A549 (cell line): ENCODE measurements at regions of chr6 and their contacts with region 1.

Region 1: GRCh38 chr6:34757687-34758274 is 476 bp downstream of the SNRPC start:
- DNase-seq: no peak
- ATAC-seq: no peak; a peak in 1 of 6 replicates
- H3K4me3 ChIP-seq: peak overlapping the region; percentile 69
- H3K27ac ChIP-seq: peak overlapping the region; percentile 95 to 98
- H3K4me1 ChIP-seq: 0 out of 3 replicates have a peak, but pooled peaks cover 3% of the 10 kb centered on the region
- CTCF ChIP-seq: no peak
- EP300 ChIP-seq: no peak
- POLR2A ChIP-seq: no peak
- RAD21 ChIP-seq: no peak

Region 2: DNA sequence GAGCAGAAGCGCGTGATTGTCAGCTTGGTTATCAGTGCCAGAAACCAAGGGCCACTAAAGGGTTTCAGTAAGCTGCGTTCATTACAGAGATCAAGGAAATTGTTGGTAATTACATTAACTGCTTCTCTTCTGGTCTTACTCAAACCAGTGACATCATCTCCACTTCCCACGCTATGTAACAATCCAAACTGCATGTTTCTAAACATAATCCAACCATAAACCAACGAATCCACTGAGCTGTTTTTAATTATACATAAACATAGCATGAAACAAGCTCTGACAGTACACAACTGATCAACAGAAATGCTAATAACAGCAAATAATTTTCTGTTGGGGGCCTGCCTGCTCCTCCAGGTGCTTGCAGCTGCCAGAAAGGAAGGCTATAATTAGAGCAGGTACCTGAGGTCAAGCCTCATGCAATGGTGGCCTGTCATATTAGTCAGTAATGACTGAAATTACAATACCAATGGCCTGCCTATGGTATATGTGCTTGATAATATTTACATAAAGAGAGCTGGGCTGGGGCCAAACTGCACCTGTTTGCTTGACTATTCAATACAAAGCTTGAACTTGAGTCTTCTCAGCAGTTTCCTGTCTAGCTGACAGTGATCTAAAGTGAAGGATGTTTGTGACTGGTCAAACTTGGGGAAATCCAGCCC is 101.3 kb before region 1 on chr6:
- CTCF ChIA-PET with region 1: interaction called, 5 read pairs
- POLR2A ChIA-PET with region 1: interaction called, 13 read pairs
- DNase-seq: no peak
- ATAC-seq: peak; percentile 28 to 41; a peak in 3 of 6 replicates
- H3K4me3 ChIP-seq: peak overlapping the region; percentile 28; the same call in 1 of the 3 replicates
- H3K27ac ChIP-seq: peak overlapping the region; percentile 79 to 95
- H3K4me1 ChIP-seq: peaks cover 51% of the 10 kb centered on the region
- CTCF ChIP-seq: no peak
- EP300 ChIP-seq: no peak
- POLR2A ChIP-seq: no peak
- RAD21 ChIP-seq: no peak

Region 3: DNA sequence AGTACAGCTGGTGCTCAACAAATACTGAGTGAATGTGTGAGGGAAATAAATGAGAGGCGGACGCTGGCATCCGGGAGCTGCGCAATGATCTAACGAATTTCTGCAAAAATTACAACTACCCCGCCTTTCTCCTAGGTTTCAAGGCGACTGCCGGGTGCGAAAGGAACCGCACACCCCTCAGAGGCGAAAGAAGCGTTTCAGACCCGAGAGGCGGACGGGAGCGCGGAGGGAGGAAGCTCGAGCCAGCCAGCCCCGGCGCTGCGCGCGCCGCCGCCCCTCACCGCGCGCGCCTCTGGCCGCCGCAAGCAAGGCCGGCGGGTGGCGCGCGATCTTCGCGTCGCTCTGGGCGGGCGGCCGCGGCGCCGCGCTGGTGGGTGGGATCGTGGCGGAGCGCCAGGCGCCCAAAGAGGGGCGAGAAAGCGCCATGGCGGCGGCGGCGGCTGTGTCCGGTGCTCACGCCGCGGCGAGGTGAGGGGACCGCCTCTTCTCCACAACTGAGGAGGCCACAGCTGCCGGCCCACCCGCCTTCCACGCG is 34.0 kb after region 1 on chr6 and contains the start of gene BLTP3A:
- CTCF ChIA-PET with region 1: interaction called, 6 read pairs
- POLR2A ChIA-PET with region 1: interaction called, 10 read pairs
- DNase-seq: peak; percentile 61 to 69
- ATAC-seq: peak; percentile 88 to 89
- H3K4me3 ChIP-seq: peak within 1 kb of the TSS; percentile 96
- H3K27ac ChIP-seq: peak within 1 kb of the TSS; percentile 93 to 99
- H3K4me1 ChIP-seq: peaks cover 20% of the 10 kb centered on the region
- CTCF ChIP-seq: no peak; the same call in 1 of the 3 replicates
- EP300 ChIP-seq: no peak
- POLR2A ChIP-seq: peak; percentile 42; the same call in 1 of the 2 replicates
- RAD21 ChIP-seq: no peak; a peak in 1 of 5 replicates
- polyA plus RNA-seq, gene BLTP3A: 15.0 and 15.7 TPM in 2 replicates